ENCODE measurements at regions of chr16 and their contacts with region 1.

Region 1: DNA sequence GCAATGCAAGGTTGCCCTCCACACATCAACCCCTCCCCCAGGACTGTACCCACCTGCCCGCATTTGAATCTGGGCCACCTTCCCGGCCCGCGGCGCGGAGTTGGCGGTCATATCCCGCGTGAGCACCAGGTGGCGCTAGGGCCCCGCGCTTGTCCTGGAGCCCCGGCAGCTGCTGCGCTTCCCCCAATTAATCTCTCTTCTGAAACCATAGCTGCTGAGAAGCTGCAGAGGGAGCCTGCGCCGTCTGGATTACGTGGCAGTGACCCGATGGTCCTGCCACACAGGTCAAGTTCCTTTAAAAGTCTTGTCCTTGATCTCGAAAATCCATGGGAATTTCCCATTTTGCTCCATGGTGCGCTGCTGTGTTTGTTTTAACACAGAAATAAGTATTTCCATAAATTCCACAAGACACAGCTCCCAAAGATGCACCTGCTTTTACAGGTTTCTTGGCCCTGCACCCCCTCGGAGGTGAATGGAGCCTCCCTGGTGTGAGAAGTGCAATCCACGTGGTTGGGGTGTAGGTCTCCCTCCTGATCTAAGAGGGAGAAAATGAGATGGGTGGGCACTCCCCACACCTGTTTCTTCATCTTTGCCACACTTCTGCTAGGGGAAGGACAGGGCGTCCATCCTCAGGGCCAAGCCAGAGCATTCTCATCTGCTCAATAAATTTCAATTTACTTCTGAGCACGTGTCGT is 22.1 kb downstream of the COX4I1 start:
- DNase-seq: peak; percentile 92
- CTCF ChIP-seq: peak; percentile 94

Region 2: GRCh38 chr16:85728879-85729278 is 92.7 kb before region 1 on chr16:
- CTCF ChIA-PET with region 1: no interaction called
- POLR2A ChIA-PET with region 1: no interaction called
- DNase-seq: no peak
- CTCF ChIP-seq: no peak

Region 3: GRCh38 chr16:85799497-85800337 is 21.9 kb before region 1 on chr16 and contains the starts of genes COX4I1 and EMC8:
- CTCF ChIA-PET with region 1: interaction called, 58 read pairs
- POLR2A ChIA-PET with region 1: no interaction called
- DNase-seq: peak; percentile 97
- CTCF ChIP-seq: no peak

Region 4: DNA sequence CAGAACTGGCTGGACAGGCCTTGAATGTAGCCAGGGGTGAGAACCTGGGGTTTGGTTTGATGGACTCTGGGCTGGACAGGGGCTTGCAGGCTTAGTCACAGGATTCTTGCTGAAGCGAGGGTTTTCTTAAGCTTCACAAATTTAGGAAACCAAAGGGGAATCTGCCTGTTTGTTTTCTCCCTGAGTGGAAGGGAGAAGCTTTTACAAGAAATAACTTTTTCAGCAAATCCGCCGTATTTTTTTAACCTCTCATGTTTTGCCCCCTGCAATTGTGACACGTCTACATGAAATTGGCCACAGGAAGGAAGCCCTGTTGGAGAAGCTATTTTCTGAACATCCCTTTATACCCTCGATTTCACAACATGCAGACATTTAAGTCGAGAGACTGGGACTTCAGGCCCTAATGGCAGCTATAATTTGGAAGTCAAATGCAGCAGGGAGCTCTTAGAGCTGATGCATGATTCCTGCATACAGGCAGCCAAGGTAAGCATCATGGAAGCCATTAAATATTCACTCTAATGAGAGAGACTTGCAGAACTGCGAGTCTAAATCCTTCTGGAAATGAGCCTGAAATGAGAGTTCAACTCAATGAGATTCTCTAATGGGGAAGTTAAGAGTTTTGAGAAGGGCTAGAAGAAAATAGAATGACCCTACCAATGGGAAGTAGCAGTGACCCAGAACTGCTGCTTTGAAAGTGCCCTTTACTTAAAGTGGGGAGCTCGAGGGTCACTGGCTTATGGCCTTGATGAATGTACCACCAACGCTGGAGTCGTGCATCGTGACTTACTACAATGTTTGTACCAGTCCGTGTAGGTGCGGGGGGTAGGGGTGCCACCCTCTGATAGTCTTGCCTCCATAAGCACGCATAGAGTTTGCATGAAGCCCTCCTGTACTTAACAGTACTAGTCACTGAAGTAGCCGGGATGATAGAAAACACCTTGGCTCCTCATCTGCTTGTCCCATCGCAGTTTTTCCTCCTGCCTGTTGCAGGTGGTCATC is 32.3 kb after region 1 on chr16:
- CTCF ChIA-PET with region 1: interaction called, 16 read pairs
- POLR2A ChIA-PET with region 1: no interaction called
- DNase-seq: no peak
- CTCF ChIP-seq: no peak

Region 5: DNA sequence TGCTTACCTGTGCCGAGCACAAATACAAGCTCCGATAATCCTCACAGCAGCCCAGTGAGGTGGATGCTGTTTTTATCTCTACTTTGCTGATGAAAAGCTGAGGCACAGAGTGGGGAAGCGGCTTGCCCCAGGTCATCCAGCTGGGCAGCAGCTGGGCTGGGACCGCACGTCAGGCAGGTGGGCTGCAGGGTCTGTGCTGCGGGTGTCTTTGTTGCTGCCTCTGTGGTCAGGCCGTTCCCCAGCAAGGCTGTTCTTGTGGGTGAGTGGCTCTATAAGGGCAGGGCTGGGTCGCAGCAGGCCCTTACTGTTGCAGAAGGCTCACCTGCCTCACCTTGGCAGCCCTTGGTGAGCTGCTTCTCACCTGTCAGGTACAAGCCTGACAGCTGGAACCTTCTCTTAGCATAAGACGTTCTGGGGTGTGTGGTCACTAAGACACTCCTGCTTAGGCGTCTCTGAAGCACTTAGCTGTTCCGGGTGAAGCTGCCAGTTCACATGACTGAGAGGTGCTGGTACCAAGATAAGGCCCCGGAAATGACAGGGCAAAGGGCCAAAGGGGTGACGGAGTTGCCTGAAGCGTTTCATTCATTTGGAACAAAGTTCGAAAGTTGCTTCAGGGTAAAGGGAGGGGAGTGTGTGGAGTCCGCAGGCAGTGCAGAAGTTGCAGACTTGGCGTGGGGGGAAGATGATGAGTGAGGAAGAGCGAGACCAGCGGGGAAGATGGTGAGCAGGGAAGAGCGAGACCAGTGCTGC is 94.7 kb after region 1 on chr16:
- CTCF ChIA-PET with region 1: interaction called, 25 read pairs
- POLR2A ChIA-PET with region 1: interaction called, 6 read pairs
- DNase-seq: no peak
- CTCF ChIP-seq: no peak

Region 6: DNA sequence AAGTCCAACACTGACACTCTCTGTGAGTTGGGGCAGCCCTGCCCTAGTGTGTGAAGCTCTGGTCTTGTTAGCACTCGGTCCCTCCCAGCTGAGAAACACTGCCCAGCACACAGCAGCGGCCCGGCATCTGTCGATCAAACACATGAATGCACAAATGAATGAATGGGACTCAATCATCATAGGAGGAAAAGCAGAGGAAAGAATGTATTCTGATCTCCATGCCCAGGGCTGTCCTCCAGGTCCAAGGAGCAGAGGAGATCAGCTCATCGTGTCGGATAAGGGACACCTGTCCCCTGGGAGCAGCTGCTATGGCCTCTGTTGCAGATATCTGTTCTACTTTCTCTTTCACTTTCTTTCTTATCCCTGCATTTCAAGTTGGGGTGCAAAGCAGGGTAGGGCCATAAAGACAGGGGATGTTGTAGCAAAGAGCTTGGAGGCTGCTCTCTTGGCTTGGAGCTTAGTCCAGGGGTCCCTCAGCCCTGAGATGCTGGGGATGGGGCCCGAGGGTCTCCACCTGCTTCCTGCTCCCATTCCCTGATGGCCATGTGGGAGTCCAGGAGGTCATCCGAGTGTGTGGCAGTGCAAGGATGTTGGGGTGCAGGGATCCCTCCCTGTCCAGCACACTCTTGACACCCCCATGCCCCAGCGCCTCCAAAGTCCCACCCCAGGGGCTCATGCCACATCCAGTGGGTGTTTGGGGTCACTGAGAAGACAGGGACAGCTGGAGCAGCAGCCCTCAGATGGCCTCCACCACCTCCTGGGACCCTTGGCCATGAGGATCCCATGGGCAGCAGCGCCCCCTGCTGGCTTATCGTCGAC is 165.6 kb after region 1 on chr16:
- CTCF ChIA-PET with region 1: interaction called, 162 read pairs
- POLR2A ChIA-PET with region 1: interaction called, 3 read pairs
- DNase-seq: peak; percentile 80
- CTCF ChIP-seq: peak; percentile 22

Region 7: GRCh38 chr16:86016201-86016871 is 194.7 kb after region 1 on chr16:
- CTCF ChIA-PET with region 1: interaction called, 255 read pairs
- POLR2A ChIA-PET with region 1: no interaction called
- DNase-seq: peak; percentile 76
- CTCF ChIP-seq: peak; percentile 67

Region 8: GRCh38 chr16:86519649-86520316 is 698.2 kb after region 1 on chr16:
- CTCF ChIA-PET with region 1: interaction called, 27 read pairs
- POLR2A ChIA-PET with region 1: no interaction called
- DNase-seq: peak; percentile 79
- CTCF ChIP-seq: peak; percentile 92